Naive thymus-derived CD4-positive, alpha-beta T cell (primary cell): ENCODE measurements at regions of chr2 and their contacts with region 1.

Region 1: GRCh38 chr2:54723131-54723995 is at the start of gene EML6:
- DNase-seq: peak; percentile 94 to 99 (median 98)
- ATAC-seq: peak; percentile 98
- H3K4me3 ChIP-seq: peak within 1 kb of the TSS; percentile 77
- H3K4me3 Mint-ChIP-seq: peak within 1 kb of the TSS; percentile 87 to 97 (median 92)
- H3K27ac ChIP-seq: peak within 1 kb of the TSS; percentile 70
- H3K27ac Mint-ChIP-seq: peak within 1 kb of the TSS; percentile 50 to 90 (median 71)
- H3K4me1 ChIP-seq: peaks cover 0 to 6% of the 10 kb centered on the region in 2 donors
- H3K4me1 Mint-ChIP-seq: peaks cover 10 to 20% (median 12%) of the 10 kb centered on the region in 7 donors
- H3K27me3 ChIP-seq: peaks cover 0 to 5% of the 10 kb centered on the region in 2 donors
- H3K27me3 Mint-ChIP-seq: peaks cover 34 to 79% (median 51%) of the 10 kb centered on the region in 5 donors
- total RNA-seq, gene EML6: 0.32 to 2.5 (median 1.5) TPM

Region 2: DNA sequence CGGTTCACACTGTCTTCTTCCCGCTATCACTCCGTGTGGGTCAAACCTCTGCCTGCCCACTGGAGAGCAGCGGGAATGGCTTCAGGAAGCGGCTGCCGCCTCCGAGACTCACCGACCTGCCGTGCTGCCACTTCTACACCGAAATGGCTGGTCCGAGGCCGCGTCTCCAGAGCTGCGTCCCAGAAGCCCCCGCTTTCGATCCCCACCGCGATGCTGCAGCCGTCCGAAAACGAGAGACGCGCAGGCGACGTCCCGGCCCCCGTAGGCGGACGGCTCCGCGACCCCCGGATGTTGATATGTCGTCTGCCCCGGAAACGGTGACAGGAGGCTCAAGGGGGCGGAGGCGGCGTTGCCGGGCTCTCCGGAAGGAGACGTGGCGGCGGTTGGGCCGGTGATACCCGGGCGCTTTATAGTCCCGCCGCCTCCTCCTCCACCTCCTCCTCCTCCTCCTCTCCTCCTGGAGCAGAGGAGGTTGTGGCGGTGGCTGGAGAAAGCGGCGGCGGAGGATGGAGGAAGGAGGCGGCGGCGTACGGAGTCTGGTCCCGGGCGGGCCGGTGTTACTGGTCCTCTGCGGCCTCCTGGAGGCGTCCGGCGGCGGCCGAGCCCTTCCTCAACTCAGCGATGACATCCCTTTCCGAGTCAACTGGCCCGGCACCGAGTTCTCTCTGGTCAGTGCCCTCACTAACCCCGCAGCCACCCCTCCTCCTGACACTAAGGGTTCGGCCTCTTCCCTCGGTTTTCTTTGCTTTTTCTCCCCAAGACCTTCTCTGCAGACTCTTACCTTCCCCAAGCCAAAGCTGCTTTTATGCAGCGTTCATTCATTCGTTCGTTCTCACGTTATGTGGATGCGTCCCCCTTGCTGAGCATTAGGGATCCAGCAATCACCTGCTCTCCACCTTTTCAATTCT is 936.4 kb before region 1 on chr2 and contains the starts of genes ASB3 and ERLEC1:
- CTCF ChIA-PET with region 1: no interaction called
- POLR2A ChIA-PET with region 1: no interaction called
- intact Hi-C with region 1: loop called (anchors 1 to 2 kb)
- DNase-seq: peak; percentile 69 to 87 (median 83)
- ATAC-seq: peak; percentile 95
- H3K4me3 ChIP-seq: peak within 1 kb of the TSS; percentile 66
- H3K4me3 Mint-ChIP-seq: peak within 1 kb of the TSS; percentile 88 to 99 (median 98)
- H3K27ac ChIP-seq: peak within 1 kb of the TSS; percentile 82
- H3K27ac Mint-ChIP-seq: peak within 1 kb of the TSS; percentile 81 to 99 (median 96)
- H3K4me1 ChIP-seq: peaks cover 14 to 16% of the 10 kb centered on the region in 2 donors
- H3K4me1 Mint-ChIP-seq: peaks cover 37 to 79% (median 67%) of the 10 kb centered on the region in 7 donors
- H3K27me3 ChIP-seq: no peaks in the 10 kb centered on the region
- H3K27me3 Mint-ChIP-seq: no peaks in the 10 kb centered on the region
- total RNA-seq, gene ASB3: 24.9 to 43.2 (median 34.5) TPM
- total RNA-seq, gene ERLEC1: 13.3 to 30.1 (median 26.3) TPM

Region 3: DNA sequence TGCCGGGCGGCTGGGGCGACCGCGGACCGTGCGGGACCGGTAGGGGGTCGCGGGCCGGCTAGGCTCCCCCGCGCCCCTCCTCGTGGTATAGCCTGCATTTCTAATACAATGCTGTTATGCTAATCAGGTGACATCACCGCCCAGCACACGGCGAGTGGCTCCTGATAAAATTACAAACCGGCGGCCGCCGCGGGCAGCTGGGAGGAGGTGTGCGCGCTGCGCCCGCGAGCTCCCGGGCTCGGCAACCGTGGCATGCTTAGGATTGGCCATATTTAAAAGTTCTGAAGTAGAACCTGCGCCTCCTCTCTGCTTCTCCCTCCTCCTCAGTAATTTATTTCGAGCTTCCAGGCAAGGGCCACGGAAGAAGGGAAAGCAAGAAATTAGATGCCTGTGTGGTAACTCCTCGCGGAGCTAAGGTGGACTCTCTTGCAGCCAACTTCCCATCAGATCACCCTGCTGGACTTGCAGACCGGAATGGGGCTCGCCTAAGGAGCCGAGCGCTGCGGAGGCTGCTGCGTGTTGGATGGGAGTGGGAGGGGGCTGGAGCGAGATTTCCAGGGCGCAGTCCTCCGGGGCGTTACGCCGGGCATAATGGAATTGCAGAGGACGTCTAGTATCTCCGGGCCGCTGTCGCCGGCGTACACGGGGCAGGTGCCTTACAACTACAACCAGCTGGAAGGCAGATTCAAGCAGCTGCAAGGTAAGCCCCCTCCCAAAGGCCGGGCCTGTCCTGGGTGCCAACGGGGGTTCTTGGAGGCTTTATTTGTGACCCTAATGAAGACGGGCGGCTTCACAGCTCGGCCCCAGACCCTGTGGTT is 165.0 kb before region 1 on chr2:
- CTCF ChIA-PET with region 1: no interaction called
- POLR2A ChIA-PET with region 1: no interaction called
- intact Hi-C with region 1: loop called (anchors 1 kb)
- DNase-seq: peak; percentile 48 to 75 (median 64)
- ATAC-seq: peak; percentile 82
- H3K4me3 ChIP-seq: peak overlapping the region; percentile 94
- H3K4me3 Mint-ChIP-seq: peak overlapping the region; percentile 86 to 100 (median 98)
- H3K27ac ChIP-seq: peak overlapping the region; percentile 86
- H3K27ac Mint-ChIP-seq: peak overlapping the region; percentile 90 to 98 (median 96)
- H3K4me1 ChIP-seq: peaks cover 10 to 11% of the 10 kb centered on the region in 2 donors
- H3K4me1 Mint-ChIP-seq: peaks cover 29 to 65% (median 59%) of the 10 kb centered on the region in 7 donors
- H3K27me3 ChIP-seq: no peaks in the 10 kb centered on the region
- H3K27me3 Mint-ChIP-seq: no peaks in the 10 kb centered on the region

Region 4: DNA sequence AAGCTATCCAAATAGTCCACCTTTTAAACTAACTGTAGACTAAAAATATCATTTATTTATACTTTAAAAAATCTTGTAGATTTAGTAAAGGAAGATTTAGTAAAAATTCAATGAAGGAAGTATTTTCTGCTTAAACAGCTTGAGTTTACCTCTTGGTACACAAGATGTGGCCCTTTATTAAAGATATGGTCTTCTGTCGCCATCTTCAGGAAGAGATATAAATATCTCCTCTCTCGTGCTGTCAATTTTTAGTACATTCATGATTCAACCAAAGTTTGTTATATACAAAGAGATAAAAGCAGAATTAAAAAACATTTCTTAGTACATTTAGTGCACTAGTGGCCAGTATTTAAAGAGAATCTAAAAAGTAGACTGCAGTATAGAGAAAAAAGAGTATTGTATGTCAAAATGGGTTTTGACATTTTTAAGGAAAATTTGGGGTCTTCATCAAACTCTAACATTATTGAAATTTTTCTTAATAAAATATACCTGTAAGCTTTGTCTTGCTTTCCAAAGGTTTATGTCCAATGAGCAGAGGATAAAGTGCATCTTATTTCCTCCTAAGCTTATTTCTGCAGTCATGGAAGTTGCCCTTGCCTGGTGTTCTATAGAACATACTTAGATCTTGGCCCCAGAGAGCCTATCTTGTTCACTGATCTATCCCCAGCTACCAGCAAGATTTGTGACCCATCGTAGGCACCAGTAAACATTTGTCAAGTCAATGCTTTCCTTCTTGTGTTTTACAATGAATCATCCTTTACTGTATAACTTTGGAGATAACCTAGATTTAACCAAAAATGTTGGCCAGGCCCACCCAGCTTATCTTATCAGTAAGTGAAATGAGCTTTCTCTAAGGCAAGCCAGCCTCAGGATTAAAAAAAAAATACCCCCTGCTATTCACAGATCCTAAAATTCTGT is 18.4 kb before region 1 on chr2:
- CTCF ChIA-PET with region 1: interaction called, 3 read pairs
- POLR2A ChIA-PET with region 1: interaction called, 4 read pairs
- intact Hi-C with region 1: loop called in 1 of 2 experiments (anchors 1 kb)
- DNase-seq: peak in 6 of 9 donors; percentile 26 to 69 (median 58)
- ATAC-seq: peak; percentile 74
- H3K4me3 ChIP-seq: no peak overlapping the region
- H3K4me3 Mint-ChIP-seq: no peak overlapping the region
- H3K27ac ChIP-seq: no peak overlapping the region
- H3K27ac Mint-ChIP-seq: no peak overlapping the region
- H3K4me1 ChIP-seq: no peaks in the 10 kb centered on the region
- H3K4me1 Mint-ChIP-seq: peaks cover 0 to 18% (median 0%) of the 10 kb centered on the region in 7 donors
- H3K27me3 ChIP-seq: no peaks in the 10 kb centered on the region
- H3K27me3 Mint-ChIP-seq: peaks cover 10 to 59% (median 15%) of the 10 kb centered on the region in 5 donors

Region 5: GRCh38 chr2:55168221-55169154 is 445.1 kb after region 1 on chr2:
- CTCF ChIA-PET with region 1: no interaction called
- POLR2A ChIA-PET with region 1: no interaction called
- intact Hi-C with region 1: loop called (anchors 5 to 10 kb)
- DNase-seq: peak in 7 of 9 donors; percentile 21 to 53 (median 40)
- ATAC-seq: peak; percentile 78
- H3K4me3 ChIP-seq: no peak overlapping the region
- H3K4me3 Mint-ChIP-seq: no peak overlapping the region
- H3K27ac ChIP-seq: no peak overlapping the region
- H3K27ac Mint-ChIP-seq: no peak overlapping the region
- H3K4me1 ChIP-seq: no peaks in the 10 kb centered on the region
- H3K4me1 Mint-ChIP-seq: peaks cover 0 to 6% (median 0%) of the 10 kb centered on the region in 7 donors
- H3K27me3 ChIP-seq: no peaks in the 10 kb centered on the region
- H3K27me3 Mint-ChIP-seq: no peaks in the 10 kb centered on the region

Region 6: DNA sequence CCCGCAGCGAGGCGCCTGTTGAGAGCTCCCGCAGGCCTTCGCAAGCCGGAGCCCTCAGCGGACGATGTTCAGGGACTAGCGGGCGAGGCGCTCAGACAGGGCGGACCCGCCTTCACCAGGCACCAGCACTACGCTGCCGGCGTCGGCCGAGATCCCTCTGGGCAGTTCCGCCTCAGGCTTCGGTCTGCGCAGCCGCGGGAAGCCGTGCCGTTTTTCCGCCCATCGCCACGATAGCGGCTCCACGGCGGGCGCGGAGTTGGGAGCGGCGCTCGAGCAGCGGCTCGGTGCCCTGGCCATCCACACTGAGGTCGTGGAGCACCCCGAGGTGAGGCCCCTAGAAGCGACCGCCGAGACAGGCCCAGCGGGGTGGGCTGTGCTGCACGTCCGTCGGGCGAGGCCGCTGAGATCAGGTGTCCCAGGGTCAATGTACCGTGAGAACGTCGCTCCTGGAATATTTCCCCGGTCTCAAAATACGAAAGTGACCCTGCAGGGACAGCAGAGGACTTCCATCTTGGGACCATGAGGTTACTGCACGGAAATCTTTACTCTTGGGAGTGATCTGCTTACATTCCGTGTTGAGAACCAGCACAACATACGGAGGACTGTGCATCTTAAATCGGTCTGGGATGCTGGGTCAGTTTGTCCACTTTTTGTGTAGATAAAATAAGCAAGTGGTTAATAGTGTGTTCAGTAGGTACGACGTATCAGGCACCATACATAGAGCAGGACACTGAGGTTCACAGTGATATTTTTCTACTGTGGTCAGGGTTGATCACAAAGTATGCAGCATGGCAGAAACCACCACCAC is 559.0 kb after region 1 on chr2:
- CTCF ChIA-PET with region 1: no interaction called
- POLR2A ChIA-PET with region 1: interaction called, 4 read pairs
- intact Hi-C with region 1: loop called in 1 of 2 experiments (anchors 5 kb)
- DNase-seq: peak; percentile 78 to 87 (median 83)
- ATAC-seq: peak; percentile 99
- H3K4me3 ChIP-seq: peak overlapping the region; percentile 80
- H3K4me3 Mint-ChIP-seq: peak overlapping the region; percentile 87 to 97 (median 92)
- H3K27ac ChIP-seq: peak overlapping the region; percentile 93
- H3K27ac Mint-ChIP-seq: peak overlapping the region; percentile 94 to 99 (median 98)
- H3K4me1 ChIP-seq: peaks cover 0 to 4% of the 10 kb centered on the region in 2 donors
- H3K4me1 Mint-ChIP-seq: peaks cover 11 to 43% (median 29%) of the 10 kb centered on the region in 7 donors
- H3K27me3 ChIP-seq: no peaks in the 10 kb centered on the region
- H3K27me3 Mint-ChIP-seq: peaks cover 0 to 2% (median 0%) of the 10 kb centered on the region in 5 donors

Region 7: DNA sequence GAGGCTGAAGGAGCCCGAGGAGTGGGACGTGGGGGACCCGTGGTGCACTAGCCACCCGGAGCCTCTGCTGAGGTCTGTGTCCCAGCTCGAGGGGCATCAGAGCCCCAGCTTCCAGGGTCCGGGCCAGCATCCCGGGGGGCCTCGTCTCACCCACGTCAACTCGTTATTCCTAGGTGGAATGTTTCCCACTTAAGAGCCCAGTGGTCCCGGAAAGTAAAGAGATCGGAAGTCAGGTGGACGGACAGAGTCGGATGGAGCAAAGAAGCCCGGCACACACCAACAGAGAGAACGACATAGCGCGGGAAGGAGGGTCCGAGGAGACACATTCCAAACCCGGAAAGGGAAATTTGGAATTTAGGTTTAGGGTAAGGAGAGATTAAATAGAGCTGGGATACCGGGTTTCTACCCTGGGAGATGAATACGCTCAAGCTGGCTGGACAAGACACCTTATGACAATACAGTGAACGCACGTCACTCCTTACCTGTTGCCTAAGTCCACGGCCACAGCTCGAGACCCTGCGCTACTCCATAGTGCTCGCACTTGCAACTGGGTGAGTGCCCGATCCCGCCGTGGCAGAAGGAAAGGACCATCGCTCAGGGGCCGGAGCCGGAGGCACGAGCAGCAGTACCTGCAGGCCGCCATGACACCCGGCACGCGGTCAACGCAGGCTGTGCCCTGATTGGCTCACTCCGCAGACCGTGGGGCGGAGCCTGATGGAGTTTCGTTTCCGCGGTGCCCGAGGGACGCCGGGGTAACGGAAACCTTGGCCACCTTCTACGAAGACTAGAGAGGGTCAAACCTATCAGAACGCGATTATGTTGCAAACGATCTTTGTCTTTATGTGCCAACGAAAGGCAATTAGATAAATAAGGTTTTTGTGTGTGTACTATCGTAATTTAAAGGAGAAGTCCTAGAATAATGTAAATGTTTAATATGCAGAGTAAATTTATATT is 970.1 kb after region 1 on chr2 and contains the start of gene PNPT1:
- CTCF ChIA-PET with region 1: no interaction called
- POLR2A ChIA-PET with region 1: no interaction called
- intact Hi-C with region 1: loop called in 1 of 2 experiments (anchors 5 kb)
- DNase-seq: peak; percentile 78 to 92 (median 90)
- ATAC-seq: peak; percentile 100
- H3K4me3 ChIP-seq: peak within 1 kb of the TSS; percentile 90
- H3K4me3 Mint-ChIP-seq: peak within 1 kb of the TSS; percentile 94 to 99 (median 97)
- H3K27ac ChIP-seq: peak within 1 kb of the TSS; percentile 72
- H3K27ac Mint-ChIP-seq: peak within 1 kb of the TSS; percentile 92 to 99 (median 96)
- H3K4me1 ChIP-seq: peaks cover 0 to 6% of the 10 kb centered on the region in 2 donors
- H3K4me1 Mint-ChIP-seq: peaks cover 18 to 50% (median 43%) of the 10 kb centered on the region in 7 donors
- H3K27me3 ChIP-seq: no peaks in the 10 kb centered on the region
- H3K27me3 Mint-ChIP-seq: peaks cover 0 to 6% (median 3%) of the 10 kb centered on the region in 5 donors
- total RNA-seq, gene PNPT1: 16.9 to 31.2 (median 18.5) TPM